Spleen (tissue), 13 donors: ENCODE measurements at regions of chr11 and their contacts with region 1.

Region 1: DNA sequence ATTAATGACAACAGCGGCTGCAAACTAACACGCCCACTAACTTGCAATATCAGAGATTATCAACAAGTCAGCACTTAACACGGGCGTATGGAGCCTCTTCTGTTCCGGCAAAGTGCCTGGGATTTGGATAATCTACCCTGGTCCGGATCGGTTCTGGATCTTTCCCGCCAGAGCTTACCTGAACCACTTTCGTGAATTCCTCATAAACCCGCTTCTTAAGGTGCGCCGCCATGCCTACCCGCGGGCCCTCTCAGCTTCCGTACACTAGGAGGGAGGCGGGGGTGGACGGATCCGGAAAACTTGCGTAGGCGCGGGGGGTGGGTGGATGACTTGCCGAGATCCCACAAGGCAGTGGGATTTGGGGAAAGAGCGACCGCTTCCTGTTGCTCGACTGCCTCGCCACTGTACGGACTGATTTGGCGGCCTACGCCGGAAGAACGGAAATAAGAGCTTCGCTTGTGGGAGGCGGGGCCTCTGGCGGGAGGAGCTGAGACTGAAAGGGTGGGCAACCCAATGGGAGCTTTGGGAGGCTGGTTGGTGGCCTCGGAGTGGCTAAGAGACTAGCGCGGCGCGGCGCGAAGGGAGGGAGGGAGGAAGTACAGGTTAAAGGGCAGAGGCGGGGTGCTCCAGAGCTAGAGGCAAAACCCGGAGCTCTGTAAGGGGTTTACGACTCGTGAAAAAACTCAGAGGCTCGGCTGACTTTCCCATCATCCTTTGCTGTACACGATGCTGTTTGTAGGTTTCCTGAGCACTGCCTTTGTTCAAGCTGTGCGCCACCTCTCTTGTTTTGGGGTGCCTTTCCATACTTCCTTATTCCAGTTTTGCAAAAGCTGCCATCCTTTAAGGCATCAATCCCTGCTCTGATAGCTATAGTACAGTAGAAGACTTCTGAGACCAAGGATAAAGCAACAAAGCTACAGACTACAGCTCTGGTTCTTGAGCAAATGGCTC is at the start of gene INTS4:
- DNase-seq: peak; percentile 99
- H3K4me3 ChIP-seq: peak within 1 kb of the TSS; percentile 48 to 83 (median 60)
- H3K27ac ChIP-seq: peak within 1 kb of the TSS; percentile 71 to 90 (median 87)
- H3K4me1 ChIP-seq: peaks cover 18 to 50% (median 33%) of the 10 kb centered on the region in 6 donors
- H3K27me3 ChIP-seq: no peaks in the 10 kb centered on the region
- CTCF ChIP-seq: peak in 3 of 11 experiments; percentile 23 to 44 (median 23)
- POLR2A ChIP-seq: peak in 2 of 3 donors; percentile 16 to 60
- total RNA-seq, gene INTS4: 40.6 to 68.5 (median 54.9) TPM

Region 2: GRCh38 chr11:77820563-77821348 is 173.9 kb before region 1 on chr11 and contains the starts of genes AAMDC and RSF1:
- intact Hi-C with region 1: loop called (anchors 5 kb)
- DNase-seq: peak; percentile 99
- H3K4me3 ChIP-seq: peak within 1 kb of the TSS; percentile 97 to 100 (median 99)
- H3K27ac ChIP-seq: peak within 1 kb of the TSS; percentile 89 to 99 (median 98)
- H3K4me1 ChIP-seq: peaks cover 14 to 70% (median 48%) of the 10 kb centered on the region in 6 donors
- H3K27me3 ChIP-seq: no peaks in the 10 kb centered on the region
- CTCF ChIP-seq: peak; percentile 59 to 94 (median 85)
- POLR2A ChIP-seq: peak in 2 of 3 donors; percentile 33 to 50
- total RNA-seq, gene AAMDC: 9.5 to 23.7 (median 21.4) TPM
- total RNA-seq, gene RSF1: 64.4 to 82.1 (median 66.9) TPM

Region 3: GRCh38 chr11:78574386-78575381 is 580.0 kb after region 1 on chr11 and contains the start of gene NARS2:
- intact Hi-C with region 1: loop called (anchors 10 kb)
- DNase-seq: peak; percentile 100
- H3K4me3 ChIP-seq: peak within 1 kb of the TSS; percentile 70 to 88 (median 82)
- H3K27ac ChIP-seq: peak within 1 kb of the TSS; percentile 82 to 92 (median 90)
- H3K4me1 ChIP-seq: peaks cover 11 to 54% (median 29%) of the 10 kb centered on the region in 6 donors
- H3K27me3 ChIP-seq: no peaks in the 10 kb centered on the region
- CTCF ChIP-seq: peak in 1 of 11 experiments; percentile 26
- POLR2A ChIP-seq: peak in 2 of 3 donors; percentile 24 to 52
- total RNA-seq, gene NARS2: 11.2 to 19.7 (median 14.3) TPM